ENCODE measurements at regions of chr1 and their contacts with region 1.

Region 1: DNA sequence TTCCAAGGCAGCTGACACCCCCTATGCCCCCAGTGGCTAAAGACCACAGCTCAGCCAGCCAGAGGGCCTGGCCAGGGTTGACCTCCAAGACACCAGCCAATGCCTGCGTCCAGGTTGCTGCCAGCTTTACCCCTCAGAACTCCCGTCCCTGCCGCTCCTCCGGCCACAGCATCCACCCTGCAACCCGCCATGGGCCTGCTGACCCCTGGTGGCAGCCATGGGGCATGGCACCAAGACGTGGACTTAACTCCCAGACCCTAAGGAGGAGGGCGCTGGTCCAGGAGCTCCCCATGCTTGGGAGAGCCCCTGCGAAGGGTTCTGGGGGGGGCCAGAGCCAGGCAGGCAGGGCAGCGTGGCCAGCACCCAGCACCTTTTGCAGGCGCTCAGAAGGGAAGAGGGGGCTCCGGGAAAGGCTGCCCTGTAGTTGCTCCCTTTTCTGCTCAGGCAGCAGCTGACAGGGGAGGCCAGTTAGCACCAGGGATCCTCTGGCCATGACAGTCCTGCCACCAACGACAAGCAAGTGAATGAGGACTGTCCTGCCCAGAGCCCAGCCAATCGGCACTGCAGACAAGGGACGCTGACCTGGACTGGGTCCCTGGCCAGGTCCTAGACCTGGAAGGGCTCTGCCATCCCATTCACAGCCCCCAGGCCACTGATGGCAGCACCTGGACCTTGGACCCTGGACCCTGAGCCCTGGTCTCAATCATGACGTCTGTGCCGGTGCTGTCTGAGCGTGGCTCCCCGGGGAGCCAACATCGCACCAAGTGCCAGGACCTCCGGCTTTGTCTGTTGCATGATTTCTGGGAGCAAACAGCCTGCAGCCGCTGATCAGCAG is 246.2 kb downstream of the NPHP4 start:
- DNase-seq: peak; percentile 57 to 86 (median 74)
- H3K4me3 ChIP-seq: no peak overlapping the region
- H3K27ac ChIP-seq: no peak overlapping the region
- H3K4me1 ChIP-seq: no peaks in the 10 kb centered on the region
- H3K27me3 ChIP-seq: peaks cover 12% of the 10 kb centered on the region
- CTCF ChIP-seq: peak; percentile 90 to 96 (median 95)
- POLR2A ChIP-seq: no peak

Region 2: DNA sequence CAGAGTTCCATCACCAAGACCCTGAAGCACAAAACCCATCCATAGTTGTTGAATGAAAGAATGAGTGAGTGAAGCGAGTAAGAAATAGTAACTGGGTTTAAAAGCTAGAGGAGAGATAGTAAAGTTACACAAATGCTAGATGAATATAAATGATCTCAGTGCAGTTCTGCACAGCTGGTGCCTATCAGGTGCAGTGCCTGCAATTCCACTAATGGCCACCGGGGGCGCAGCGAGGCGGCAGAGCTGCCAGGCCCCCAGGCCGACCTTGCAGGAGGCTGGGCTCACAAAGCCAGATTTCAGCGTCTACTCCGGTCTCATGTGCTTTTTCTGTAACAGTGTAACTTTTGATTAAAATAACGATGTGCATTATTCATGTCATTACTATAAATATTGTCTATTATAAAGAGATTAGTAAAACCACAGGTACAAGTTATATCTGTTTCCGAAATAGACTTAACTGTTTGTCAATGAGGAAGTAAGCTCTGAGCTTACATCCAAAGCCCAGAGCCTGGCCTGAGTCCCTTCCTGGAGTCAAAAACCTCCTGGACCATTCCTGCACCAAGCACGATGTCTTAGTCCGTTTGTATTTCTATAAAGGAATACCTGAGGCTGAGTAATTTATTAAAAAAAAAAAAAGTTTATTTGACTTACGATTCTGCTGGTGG is 231.3 kb before region 1 on chr1:
- intact Hi-C with region 1: loop called (anchors 2 to 5 kb)
- DNase-seq: peak; percentile 43 to 88 (median 73)
- H3K4me3 ChIP-seq: no peak overlapping the region
- H3K27ac ChIP-seq: no peak overlapping the region
- H3K4me1 ChIP-seq: no peaks in the 10 kb centered on the region
- H3K27me3 ChIP-seq: peaks cover 4% of the 10 kb centered on the region
- CTCF ChIP-seq: peak; percentile 87 to 100 (median 94)
- POLR2A ChIP-seq: no peak

Region 3: GRCh38 chr1:5637171-5637570 is 108.8 kb before region 1 on chr1:
- intact Hi-C with region 1: loop called in 1 of 2 experiments (anchors 2 kb)
- DNase-seq: peak in 6 of 7 donors; percentile 47 to 72 (median 60)
- H3K4me3 ChIP-seq: no peak overlapping the region
- H3K27ac ChIP-seq: no peak overlapping the region
- H3K4me1 ChIP-seq: no peaks in the 10 kb centered on the region
- H3K27me3 ChIP-seq: peaks cover 7% of the 10 kb centered on the region
- CTCF ChIP-seq: peak; percentile 28 to 66 (median 50)
- POLR2A ChIP-seq: no peak

Region 4: DNA sequence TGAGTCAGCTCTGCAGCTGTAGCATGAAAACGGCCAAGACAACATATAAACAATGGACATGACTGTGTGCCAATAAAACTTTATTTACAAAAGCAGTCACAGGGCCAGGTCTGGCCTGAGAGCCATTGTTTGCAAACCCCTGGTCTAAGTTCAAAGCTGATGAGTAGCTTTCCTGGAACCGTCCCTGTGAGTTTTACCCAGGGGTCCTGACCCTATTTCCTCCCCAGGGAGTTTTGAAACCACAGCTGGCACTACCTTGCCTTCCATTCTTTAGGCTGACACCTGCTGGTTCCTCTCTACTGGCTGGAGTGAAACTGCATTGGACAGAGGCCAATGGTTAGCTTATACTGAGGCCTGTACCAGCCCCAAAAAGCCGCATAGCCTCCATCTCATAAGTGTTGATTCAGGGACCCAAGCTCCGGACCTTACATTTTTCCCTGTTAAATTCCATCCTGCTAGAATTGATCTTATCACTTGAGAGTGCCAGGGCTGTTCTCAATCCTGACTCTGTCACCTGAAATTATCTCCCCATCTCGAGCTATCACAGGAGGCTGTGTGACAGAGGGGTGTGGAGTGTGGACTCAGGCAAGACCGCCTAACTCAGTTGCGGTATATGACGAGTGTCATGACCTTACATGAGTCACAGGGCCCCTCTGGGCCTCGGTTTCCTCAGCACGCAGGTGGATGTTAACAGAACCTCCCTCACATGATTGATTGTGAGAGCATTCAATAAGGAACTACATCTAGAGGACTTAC is 97.4 kb before region 1 on chr1:
- intact Hi-C with region 1: loop called in 1 of 2 experiments (anchors 5 kb)
- DNase-seq: peak in 1 of 7 donors; percentile 45
- H3K4me3 ChIP-seq: no peak overlapping the region
- H3K27ac ChIP-seq: no peak overlapping the region
- H3K4me1 ChIP-seq: peaks cover 0 to 10% of the 10 kb centered on the region in 2 donors
- H3K27me3 ChIP-seq: peaks cover 29% of the 10 kb centered on the region
- CTCF ChIP-seq: no peak
- POLR2A ChIP-seq: no peak

Region 5: DNA sequence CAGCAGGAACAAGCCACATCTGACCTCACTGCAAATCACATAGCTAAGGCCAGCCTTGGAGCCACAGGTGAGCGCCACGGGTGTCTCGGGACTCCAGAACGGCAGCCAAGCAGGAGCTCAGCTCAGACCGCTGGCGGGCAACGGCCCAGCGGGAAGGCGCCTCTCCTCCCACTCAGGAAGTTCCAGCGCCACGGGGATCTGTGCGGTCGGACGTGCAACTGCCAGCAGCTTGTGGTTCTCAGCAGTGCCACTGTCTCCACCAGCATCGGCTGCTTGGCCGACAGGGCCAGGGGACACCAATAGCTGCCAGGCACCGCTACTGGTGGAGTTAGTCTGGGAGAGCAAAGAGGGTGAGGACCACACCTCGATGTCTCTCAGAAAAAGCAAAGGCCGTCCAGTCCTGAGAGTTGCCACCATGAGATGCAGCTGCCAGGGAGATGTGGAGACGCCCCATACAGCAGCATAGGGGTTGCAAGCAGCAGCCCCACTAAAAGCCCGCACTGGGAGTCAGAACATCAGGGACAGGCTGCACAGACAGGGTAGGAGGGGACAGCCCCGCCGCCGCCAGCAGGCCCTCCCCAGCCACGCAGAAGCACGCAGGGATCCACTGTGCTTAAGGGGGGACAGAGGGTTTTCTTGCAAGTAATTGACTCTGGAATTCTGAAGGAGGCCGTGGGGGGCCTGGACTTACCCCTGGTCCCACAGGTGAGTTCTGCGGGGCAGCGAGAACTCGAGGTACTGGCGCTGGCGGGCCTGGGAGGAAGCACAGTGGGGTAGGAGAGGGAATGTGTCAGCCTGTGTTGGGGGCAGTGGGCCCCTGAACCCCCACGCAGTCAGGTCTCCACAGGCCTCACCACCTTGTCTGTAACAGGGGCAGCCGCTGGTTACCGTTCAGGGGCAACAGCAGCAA is 162.7 kb after region 1 on chr1:
- intact Hi-C with region 1: no loop called
- DNase-seq: peak in 3 of 7 donors; percentile 4 to 47 (median 8)
- H3K4me3 ChIP-seq: no peak overlapping the region
- H3K27ac ChIP-seq: no peak overlapping the region
- H3K4me1 ChIP-seq: no peaks in the 10 kb centered on the region
- H3K27me3 ChIP-seq: no peaks in the 10 kb centered on the region
- CTCF ChIP-seq: no peak
- POLR2A ChIP-seq: no peak

Region 6: DNA sequence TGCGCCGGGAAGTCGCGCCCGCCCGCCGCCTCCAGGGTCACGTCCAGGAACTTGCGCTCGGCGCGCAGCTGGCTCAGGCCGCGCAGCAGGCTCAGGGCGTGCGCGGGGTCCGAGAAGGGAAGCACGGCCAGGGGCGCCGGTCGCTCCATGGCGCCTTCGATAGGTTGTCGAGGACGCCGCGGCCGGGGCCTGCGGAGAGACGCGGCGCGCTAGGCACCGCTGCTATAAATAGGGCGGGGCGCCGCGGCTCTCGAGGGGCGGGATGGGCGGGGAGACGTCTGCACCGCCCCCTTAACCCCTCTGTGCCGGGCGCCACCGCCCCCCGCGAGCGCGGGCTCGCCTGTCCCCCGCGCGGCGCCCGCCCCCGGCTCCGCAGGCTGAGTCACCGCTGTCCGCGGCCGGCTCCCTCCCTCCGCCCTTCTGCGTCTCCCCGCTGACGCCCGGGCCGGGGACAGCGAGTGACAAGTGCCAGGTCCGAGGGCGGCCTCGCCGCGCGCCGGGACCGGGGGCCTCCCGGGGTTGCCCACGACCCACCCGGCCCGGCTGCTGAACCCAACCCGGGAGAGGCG is 856.8 kb after region 1 on chr1 and contains the start of gene KLHL21:
- intact Hi-C with region 1: no loop called
- DNase-seq: peak; percentile 91 to 94 (median 93)
- H3K4me3 ChIP-seq: peak within 1 kb of the TSS; percentile 42 to 71 (median 52)
- H3K27ac ChIP-seq: peak within 1 kb of the TSS; percentile 80 to 99 (median 98)
- H3K4me1 ChIP-seq: peaks cover 32 to 46% of the 10 kb centered on the region in 2 donors
- H3K27me3 ChIP-seq: no peaks in the 10 kb centered on the region
- CTCF ChIP-seq: peak in 1 of 6 experiments; percentile 30
- POLR2A ChIP-seq: peak; percentile 79 to 92
- total RNA-seq, gene KLHL21: 14.5 to 108 (median 58.8) TPM

Measured in adrenal gland (tissue), 19 donors.